H1 (cell line): ENCODE measurements at regions of chr5 and their contacts with region 1.

Region 1: GRCh38 chr5:36777105-36777757 is 99.3 kb upstream of the NIPBL start:
- DNase-seq: peak in 1 of 2 experiments; percentile 5
- H3K4me3 ChIP-seq: no peak overlapping the region
- H3K27ac ChIP-seq: no peak overlapping the region
- H3K4me1 ChIP-seq: no peaks in the 10 kb centered on the region
- H3K27me3 ChIP-seq: no peaks in the 10 kb centered on the region
- CTCF ChIP-seq: peak; percentile 25 to 73 (median 56)
- EP300 ChIP-seq: no peak
- POLR2A ChIP-seq: no peak
- RAD21 ChIP-seq: peak; percentile 57 to 64

Region 2: GRCh38 chr5:36662291-36662851 is 114.9 kb before region 1 on chr5:
- CTCF ChIA-PET with region 1: no interaction called
- POLR2A ChIA-PET with region 1: no interaction called
- DNase-seq: no peak
- H3K4me3 ChIP-seq: no peak overlapping the region
- H3K27ac ChIP-seq: no peak overlapping the region
- H3K4me1 ChIP-seq: peaks cover 0 to 4% (median 0%) of the 10 kb centered on the region in 4 experiments; a peak in 2 of 7 replicates
- H3K27me3 ChIP-seq: no peaks in the 10 kb centered on the region
- CTCF ChIP-seq: no peak
- EP300 ChIP-seq: no peak
- POLR2A ChIP-seq: no peak
- RAD21 ChIP-seq: no peak

Region 3: GRCh38 chr5:36763454-36763853 is 13.8 kb before region 1 on chr5:
- CTCF ChIA-PET with region 1: interaction called, 18 read pairs
- POLR2A ChIA-PET with region 1: no interaction called
- DNase-seq: no peak
- H3K4me3 ChIP-seq: no peak overlapping the region
- H3K27ac ChIP-seq: no peak overlapping the region
- H3K4me1 ChIP-seq: no peaks in the 10 kb centered on the region
- H3K27me3 ChIP-seq: no peaks in the 10 kb centered on the region
- CTCF ChIP-seq: no peak
- EP300 ChIP-seq: no peak
- POLR2A ChIP-seq: no peak
- RAD21 ChIP-seq: no peak

Region 4: DNA sequence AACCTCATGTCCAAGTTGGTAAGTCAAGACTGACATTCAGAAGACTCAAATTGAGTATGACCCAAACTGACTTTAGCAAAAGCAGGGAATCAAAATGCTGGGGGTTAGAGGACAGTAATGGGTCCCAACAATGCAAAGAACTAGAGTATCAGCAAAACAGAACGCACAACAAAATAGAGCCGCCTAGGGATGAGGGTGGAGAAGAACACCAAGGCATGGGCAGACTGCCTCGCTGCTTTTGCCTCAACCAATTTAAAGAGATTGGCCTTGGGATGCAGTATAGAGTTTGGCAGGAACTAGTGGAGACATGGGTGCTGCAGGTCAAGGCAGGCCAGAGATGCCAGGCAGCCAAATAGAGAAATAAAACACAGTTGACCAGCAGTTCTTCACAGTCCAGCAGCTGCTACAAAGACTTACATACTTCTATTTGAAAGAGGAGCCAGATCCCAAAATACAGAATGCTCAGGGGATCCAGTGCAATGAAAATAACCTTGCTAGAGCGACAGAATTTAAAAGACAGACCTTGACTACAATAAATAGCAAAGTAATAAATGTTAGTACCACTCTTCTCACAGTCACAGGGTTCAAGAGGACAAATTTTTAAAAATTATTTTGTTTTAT is 15.4 kb after region 1 on chr5:
- CTCF ChIA-PET with region 1: interaction called, 12 read pairs
- POLR2A ChIA-PET with region 1: no interaction called
- DNase-seq: no peak
- H3K4me3 ChIP-seq: no peak overlapping the region
- H3K27ac ChIP-seq: no peak overlapping the region
- H3K4me1 ChIP-seq: peaks cover 0 to 3% (median 0%) of the 10 kb centered on the region in 4 experiments; a peak in 1 of 7 replicates
- H3K27me3 ChIP-seq: no peaks in the 10 kb centered on the region
- CTCF ChIP-seq: no peak
- EP300 ChIP-seq: no peak
- POLR2A ChIP-seq: no peak
- RAD21 ChIP-seq: 0 out of 4 replicates have a peak, but pooled peaks of 1 of the 2 experiments have one; percentile 2

Region 5: GRCh38 chr5:36882250-36882649 is 105.0 kb after region 1 on chr5:
- CTCF ChIA-PET with region 1: no interaction called
- POLR2A ChIA-PET with region 1: no interaction called
- DNase-seq: no peak
- H3K4me3 ChIP-seq: no peak overlapping the region
- H3K27ac ChIP-seq: no peak overlapping the region
- H3K4me1 ChIP-seq: no peaks in the 10 kb centered on the region; a peak in 2 of 7 replicates
- H3K27me3 ChIP-seq: no peaks in the 10 kb centered on the region
- CTCF ChIP-seq: no peak
- EP300 ChIP-seq: no peak
- POLR2A ChIP-seq: no peak
- RAD21 ChIP-seq: no peak

Region 6: GRCh38 chr5:36950586-36951457 is 173.6 kb after region 1 on chr5:
- CTCF ChIA-PET with region 1: no interaction called
- POLR2A ChIA-PET with region 1: no interaction called
- DNase-seq: no peak
- H3K4me3 ChIP-seq: no peak overlapping the region
- H3K27ac ChIP-seq: no peak overlapping the region
- H3K4me1 ChIP-seq: no peaks in the 10 kb centered on the region
- H3K27me3 ChIP-seq: no peaks in the 10 kb centered on the region
- CTCF ChIP-seq: no peak
- EP300 ChIP-seq: no peak
- POLR2A ChIP-seq: no peak
- RAD21 ChIP-seq: no peak